ENCODE measurements at regions of chr11 and their contacts with region 1.

Region 1: GRCh38 chr11:59550368-59550841 is 39.1 kb downstream of the OR4D9 start:
- DNase-seq: peak; percentile 74 to 97 (median 76)
- ATAC-seq: peak; percentile 82
- H3K4me3 ChIP-seq: peak overlapping the region; percentile 57
- H3K27ac ChIP-seq: peak overlapping the region; percentile 100
- H3K4me1 ChIP-seq: peaks cover 22 to 31% of the 10 kb centered on the region in 2 experiments; a peak in 4 of 5 replicates
- H3K27me3 ChIP-seq: no peaks in the 10 kb centered on the region
- CTCF ChIP-seq: peak; percentile 59 to 70 (median 62)
- EP300 ChIP-seq: peak; percentile 49
- POLR2A ChIP-seq: no peak
- RAD21 ChIP-seq: peak; percentile 26 to 64; a peak in 3 of 4 replicates

Region 2: GRCh38 chr11:59560702-59561469 is 10.5 kb after region 1 on chr11:
- CTCF ChIA-PET with region 1: no interaction called
- POLR2A ChIA-PET with region 1: interaction called, 69 read pairs
- in situ Hi-C with region 1: no loop called
- intact Hi-C with region 1: loop called (anchors 1 kb)
- DNase-seq: peak; percentile 88 to 94 (median 90)
- ATAC-seq: peak; percentile 56
- H3K4me3 ChIP-seq: peak overlapping the region; percentile 60
- H3K27ac ChIP-seq: peak overlapping the region; percentile 87
- H3K4me1 ChIP-seq: peaks cover 17 to 27% of the 10 kb centered on the region in 2 experiments
- H3K27me3 ChIP-seq: no peaks in the 10 kb centered on the region
- CTCF ChIP-seq: no peak
- EP300 ChIP-seq: no peak
- POLR2A ChIP-seq: peak; percentile 57; the same call in 1 of the 2 replicates
- RAD21 ChIP-seq: no peak

Region 3: DNA sequence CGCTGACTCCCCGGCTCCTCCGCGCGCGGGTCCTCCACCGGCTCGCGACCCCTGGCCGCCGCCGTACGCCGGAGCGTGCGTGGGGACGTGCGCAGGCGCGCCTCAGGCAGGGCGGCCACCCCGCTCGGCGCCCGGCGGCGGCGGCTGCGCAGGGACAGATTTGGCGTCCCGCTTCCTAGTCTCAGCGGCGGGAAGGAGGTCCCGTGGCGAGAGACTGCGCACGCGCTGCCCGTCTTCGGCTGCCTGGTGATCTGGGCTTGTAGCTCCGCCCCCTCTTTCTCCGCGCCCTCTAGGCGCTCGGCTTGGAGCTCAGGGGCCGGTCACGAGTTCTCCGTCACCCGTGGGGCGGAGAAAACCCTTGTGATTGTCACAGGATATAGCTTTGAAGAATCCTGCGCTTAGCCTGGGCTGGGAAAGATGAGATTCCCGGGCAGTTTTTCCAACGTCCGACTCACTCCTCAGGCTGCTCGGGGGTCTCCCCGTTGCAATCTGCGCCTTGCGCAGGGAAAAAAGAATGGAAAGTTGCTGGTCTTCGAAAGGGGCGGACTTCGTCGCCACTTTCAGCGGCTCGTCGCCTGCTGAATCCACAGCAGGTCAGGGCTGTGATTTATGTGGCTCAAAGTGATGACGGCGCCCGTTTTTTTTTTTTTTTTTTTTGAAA is 118.7 kb after region 1 on chr11 and contains the start of gene PATL1:
- CTCF ChIA-PET with region 1: no interaction called
- POLR2A ChIA-PET with region 1: interaction called, 10 read pairs
- in situ Hi-C with region 1: no loop called
- intact Hi-C with region 1: no loop called
- DNase-seq: peak; percentile 98 to 99 (median 98)
- ATAC-seq: peak; percentile 95
- H3K4me3 ChIP-seq: peak within 1 kb of the TSS; percentile 82
- H3K27ac ChIP-seq: peak within 1 kb of the TSS; percentile 92
- H3K4me1 ChIP-seq: peaks cover 11 to 14% of the 10 kb centered on the region in 2 experiments; a peak in 3 of 5 replicates
- H3K27me3 ChIP-seq: no peaks in the 10 kb centered on the region
- CTCF ChIP-seq: no peak
- EP300 ChIP-seq: no peak
- POLR2A ChIP-seq: peak; percentile 75
- RAD21 ChIP-seq: no peak
- polyA plus RNA-seq, gene PATL1: 3.2 to 5.0 TPM

Measured in K562 (cell line).